Right lobe of liver (tissue), 6 donors: ENCODE measurements at regions of chr9 and their contacts with region 1.

Region 1: GRCh38 chr9:120336021-120336752 is 243.8 kb downstream of the CDK5RAP2 start:
- DNase-seq: no peak
- ATAC-seq: no peak
- H3K4me3 ChIP-seq: no peak overlapping the region
- H3K27ac ChIP-seq: no peak overlapping the region
- H3K4me1 ChIP-seq: no peaks in the 10 kb centered on the region
- H3K27me3 ChIP-seq: no peaks in the 10 kb centered on the region
- CTCF ChIP-seq: no peak
- POLR2A ChIP-seq: no peak

Region 2: GRCh38 chr9:119559986-119560385 is 776.2 kb before region 1 on chr9:
- intact Hi-C with region 1: loop called in 1 of 2 experiments (anchors 10 kb)
- DNase-seq: no peak
- ATAC-seq: peak; percentile 5 to 36 (median 18)
- H3K4me3 ChIP-seq: no peak overlapping the region
- H3K27ac ChIP-seq: no peak overlapping the region
- H3K4me1 ChIP-seq: no peaks in the 10 kb centered on the region
- H3K27me3 ChIP-seq: no peaks in the 10 kb centered on the region
- CTCF ChIP-seq: no peak
- POLR2A ChIP-seq: no peak